ENCODE measurements at regions of chr16 and their contacts with region 1.

Region 1: DNA sequence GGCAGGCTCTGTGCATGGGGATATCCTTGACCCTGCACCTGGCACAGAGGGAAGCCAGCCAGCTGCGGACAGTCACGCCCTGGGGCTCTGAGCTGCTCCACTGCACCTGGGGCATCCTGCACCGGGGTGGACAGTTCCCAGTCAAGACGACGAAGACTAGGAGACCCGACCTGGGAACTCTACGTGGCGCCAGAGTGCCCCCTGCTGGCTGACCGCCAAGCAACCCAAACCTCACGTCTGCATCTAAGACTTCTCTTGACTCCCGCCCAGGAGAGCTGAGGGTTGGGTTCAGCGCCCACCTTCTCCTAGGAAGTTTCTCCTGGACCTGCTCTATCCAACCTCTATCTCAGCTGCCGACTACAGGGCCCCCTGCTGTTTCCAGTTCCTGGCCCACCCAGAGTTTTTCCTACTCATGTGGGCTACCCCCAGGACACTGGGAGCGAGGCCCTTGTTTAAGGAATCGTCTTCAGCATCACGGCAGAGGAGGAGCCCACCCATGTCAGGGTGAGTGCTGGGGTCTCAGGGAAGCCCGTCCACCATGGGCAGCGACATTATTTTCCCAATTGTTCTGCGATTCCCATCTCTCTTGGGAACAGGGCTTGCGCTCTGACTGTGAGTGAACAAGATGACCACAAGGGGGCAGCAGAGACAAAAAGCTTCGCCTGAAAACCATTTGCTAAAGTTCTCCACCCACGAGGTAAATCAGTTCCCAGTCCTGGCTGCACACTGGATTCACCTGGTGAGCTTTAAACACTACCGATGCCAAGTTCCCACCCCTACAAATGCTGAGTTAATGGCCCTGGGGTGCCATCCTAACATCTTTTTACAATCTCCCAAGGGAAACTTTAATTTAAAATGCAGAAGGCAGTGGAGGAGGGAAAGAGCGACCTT is 29.3 kb downstream of the TLE7 start:
- DNase-seq: peak; percentile 71
- H3K4me3 ChIP-seq: no peak overlapping the region
- H3K27ac ChIP-seq: no peak overlapping the region
- H3K4me1 ChIP-seq: peaks cover 0 to 8% (median 0%) of the 10 kb centered on the region in 4 donors
- H3K27me3 ChIP-seq: peaks cover 21% of the 10 kb centered on the region
- CTCF ChIP-seq: peak; percentile 85 to 89 (median 87)
- EP300 ChIP-seq: no peak
- POLR2A ChIP-seq: no peak

Region 2: GRCh38 chr16:71201054-71201453 is 211.5 kb before region 1 on chr16:
- in situ Hi-C with region 1: no loop called
- intact Hi-C with region 1: no loop called
- DNase-seq: no peak
- H3K4me3 ChIP-seq: no peak overlapping the region
- H3K27ac ChIP-seq: no peak overlapping the region
- H3K4me1 ChIP-seq: no peaks in the 10 kb centered on the region
- H3K27me3 ChIP-seq: no peaks in the 10 kb centered on the region
- CTCF ChIP-seq: no peak
- EP300 ChIP-seq: no peak
- POLR2A ChIP-seq: no peak

Region 3: DNA sequence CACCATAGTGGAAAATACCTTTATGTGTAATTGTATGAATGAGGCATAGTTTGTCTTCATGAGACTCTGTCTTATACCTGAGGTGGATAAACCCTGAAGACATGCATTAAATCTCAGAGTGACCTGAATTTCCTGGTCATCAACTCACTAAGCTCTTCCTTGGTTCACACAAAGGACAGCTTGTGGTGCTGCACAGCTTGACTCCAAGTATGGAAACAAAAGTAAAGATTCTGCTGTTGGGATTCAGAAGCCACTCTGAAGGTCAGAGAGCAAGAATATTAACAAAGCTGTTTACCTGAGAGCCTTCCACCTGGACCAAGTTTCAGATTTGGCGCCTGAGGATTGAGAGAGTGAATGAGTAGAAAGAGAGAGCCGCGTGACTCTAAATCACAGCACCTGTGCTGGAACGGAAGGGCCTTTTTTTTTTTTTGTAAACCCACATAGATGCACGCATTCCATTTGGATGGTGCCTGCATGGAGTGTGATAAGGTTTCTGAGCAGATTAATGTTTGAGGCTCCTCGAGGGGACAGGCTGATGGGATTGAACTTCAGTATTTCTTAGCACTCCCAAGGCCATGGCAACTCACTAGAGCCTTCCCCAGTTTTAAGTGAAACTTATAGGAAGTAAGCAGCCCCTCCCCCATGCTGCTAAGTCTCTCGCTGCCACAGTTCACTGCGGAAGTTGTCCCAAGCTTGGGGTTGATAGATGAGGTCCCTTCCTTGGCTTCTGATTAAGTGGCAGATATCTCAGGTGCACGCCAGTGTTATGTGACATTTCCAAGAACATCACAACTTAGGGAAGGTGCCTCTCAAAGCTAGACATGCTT is 25.3 kb before region 1 on chr16:
- in situ Hi-C with region 1: no loop called
- intact Hi-C with region 1: no loop called
- DNase-seq: no peak
- H3K4me3 ChIP-seq: no peak overlapping the region
- H3K27ac ChIP-seq: no peak overlapping the region
- H3K4me1 ChIP-seq: no peaks in the 10 kb centered on the region
- H3K27me3 ChIP-seq: peaks cover 3% of the 10 kb centered on the region
- CTCF ChIP-seq: no peak
- EP300 ChIP-seq: no peak
- POLR2A ChIP-seq: no peak

Region 4: GRCh38 chr16:71489122-71489521 is 76.6 kb after region 1 on chr16 and contains the start of gene ZNF19:
- in situ Hi-C with region 1: no loop called
- intact Hi-C with region 1: no loop called
- DNase-seq: no peak
- H3K4me3 ChIP-seq: no peak within 1 kb of the TSS
- H3K27ac ChIP-seq: no peak within 1 kb of the TSS
- H3K4me1 ChIP-seq: peaks cover 0 to 4% (median 3%) of the 10 kb centered on the region in 4 donors
- H3K27me3 ChIP-seq: no peaks in the 10 kb centered on the region
- CTCF ChIP-seq: no peak
- EP300 ChIP-seq: no peak
- POLR2A ChIP-seq: no peak
- total RNA-seq, gene ZNF19: 11.6 to 39.8 (median 22.5) TPM

Region 5: GRCh38 chr16:71499775-71500364 is 87.4 kb after region 1 on chr16:
- in situ Hi-C with region 1: loop called in 2 of 4 experiments (anchors 5 kb)
- intact Hi-C with region 1: loop called (anchors 5 kb)
- DNase-seq: peak; percentile 26
- H3K4me3 ChIP-seq: no peak overlapping the region
- H3K27ac ChIP-seq: no peak overlapping the region
- H3K4me1 ChIP-seq: no peaks in the 10 kb centered on the region
- H3K27me3 ChIP-seq: no peaks in the 10 kb centered on the region
- CTCF ChIP-seq: peak; percentile 53 to 62 (median 59)
- EP300 ChIP-seq: no peak
- POLR2A ChIP-seq: no peak

Region 6: DNA sequence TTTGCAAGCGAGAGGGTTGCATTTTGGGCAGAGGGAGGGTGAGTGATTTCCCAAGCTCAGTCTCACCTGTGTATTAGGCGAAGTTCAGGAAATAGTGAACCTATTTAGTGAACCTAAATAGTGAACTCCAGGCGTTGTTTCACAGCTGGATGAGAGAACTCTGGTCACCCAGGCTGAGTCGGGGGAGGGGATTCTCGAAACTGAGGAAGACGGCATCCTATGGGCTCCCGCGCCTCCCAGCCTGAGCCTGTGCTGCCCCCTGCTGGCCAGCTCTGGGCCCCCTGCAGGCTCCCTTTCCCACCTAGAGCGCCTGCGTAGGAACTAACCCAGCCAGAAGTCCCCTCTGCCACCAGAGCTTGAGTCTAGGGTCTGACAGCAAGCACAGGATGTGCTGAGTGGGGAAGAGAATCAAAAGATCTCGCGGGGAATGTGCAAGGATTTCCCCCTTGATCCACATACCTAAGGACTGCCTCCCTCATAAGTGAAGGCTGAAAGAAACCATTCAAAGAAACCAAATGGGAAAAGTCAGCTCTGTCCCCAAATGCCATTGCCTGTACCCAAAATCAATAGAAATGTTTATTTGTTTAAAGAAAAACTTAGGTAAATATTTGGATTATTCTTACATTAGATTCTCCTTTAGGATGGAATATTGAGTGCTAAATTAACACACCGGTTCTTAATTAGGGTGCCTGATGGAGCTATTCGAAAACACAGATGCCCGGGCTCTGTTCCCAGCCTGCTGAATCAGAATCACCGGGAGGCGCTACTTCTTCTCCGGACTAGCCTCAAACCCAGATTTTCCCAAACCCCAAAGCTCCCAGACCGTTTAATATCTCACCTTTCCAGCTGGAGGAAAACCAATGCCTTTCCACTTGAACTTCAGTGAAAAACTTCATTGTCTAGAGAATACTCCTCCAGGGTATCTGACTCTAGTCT is 198.7 kb after region 1 on chr16:
- in situ Hi-C with region 1: loop called in 3 of 4 experiments (anchors 10 to 25 kb)
- intact Hi-C with region 1: no loop called
- DNase-seq: peak; percentile 78
- H3K4me3 ChIP-seq: no peak overlapping the region
- H3K27ac ChIP-seq: no peak overlapping the region
- H3K4me1 ChIP-seq: peaks cover 0 to 6% (median 1%) of the 10 kb centered on the region in 4 donors
- H3K27me3 ChIP-seq: peaks cover 6% of the 10 kb centered on the region
- CTCF ChIP-seq: peak; percentile 77 to 92 (median 87)
- EP300 ChIP-seq: no peak
- POLR2A ChIP-seq: no peak

Measured in transverse colon (tissue), 4 donors.